ENCODE measurements at regions of chr12 and their contacts with region 1.

Region 1: DNA sequence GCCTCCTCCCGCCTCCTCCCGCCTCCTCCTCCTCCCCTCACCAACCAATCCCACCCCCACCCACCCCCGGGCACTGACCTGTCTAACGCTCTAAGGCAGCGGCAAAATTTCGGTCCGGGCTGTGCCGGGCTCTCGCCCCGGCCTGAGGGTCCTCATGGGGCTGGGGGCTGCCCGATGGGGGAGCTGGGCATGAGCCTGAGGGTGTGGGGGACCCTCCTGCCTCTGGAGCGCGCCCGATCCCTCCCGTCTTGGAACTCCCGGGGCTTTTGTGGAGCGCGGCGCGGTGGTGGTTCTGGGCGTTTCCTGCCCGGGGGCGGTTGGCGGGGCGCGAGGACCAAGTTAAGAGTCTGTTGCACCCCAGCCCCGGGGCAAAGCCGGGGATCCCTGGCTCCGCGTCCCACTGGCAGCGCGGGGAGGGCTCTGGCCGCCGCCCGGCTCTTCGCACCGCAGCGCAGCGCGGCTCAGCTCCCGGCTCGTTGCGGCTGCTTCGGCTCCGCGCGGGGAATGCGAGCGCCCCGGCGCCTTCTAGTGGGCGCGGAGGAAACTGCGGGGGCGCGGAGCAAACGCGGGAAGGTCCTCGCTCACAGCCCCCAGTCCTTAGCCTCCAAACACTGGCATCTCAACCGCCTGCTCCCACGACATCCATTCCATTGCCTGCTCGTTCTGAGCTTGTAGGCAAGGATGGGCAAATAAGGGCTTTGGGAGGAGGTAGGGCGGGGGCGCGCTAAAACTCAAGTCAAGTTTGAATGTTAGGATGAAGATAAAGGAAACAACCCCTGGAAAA is at the start of gene B4GALNT1:
- DNase-seq: peak in 4 of 5 donors; percentile 57 to 70 (median 61)
- H3K4me3 ChIP-seq: peak within 1 kb of the TSS in 1 of 2 donors; percentile 45
- H3K4me3 Mint-ChIP-seq: peak within 1 kb of the TSS; percentile 31 to 85 (median 74)
- H3K27ac ChIP-seq: no peak within 1 kb of the TSS
- H3K27ac Mint-ChIP-seq: peak within 1 kb of the TSS in 1 of 7 donors; percentile 17
- H3K4me1 ChIP-seq: peaks cover 13% of the 10 kb centered on the region
- H3K4me1 Mint-ChIP-seq: peaks cover 7 to 13% (median 9%) of the 10 kb centered on the region in 4 donors
- H3K27me3 ChIP-seq: peaks cover 25% of the 10 kb centered on the region
- H3K27me3 Mint-ChIP-seq: peaks cover 34 to 47% of the 10 kb centered on the region in 2 donors
- total RNA-seq, gene B4GALNT1: not detected

Region 2: GRCh38 chr12:57621497-57622292 is 11.2 kb before region 1 on chr12:
- CTCF ChIA-PET with region 1: interaction called, 29 read pairs
- POLR2A ChIA-PET with region 1: interaction called, 3 read pairs
- intact Hi-C with region 1: no loop called
- DNase-seq: peak; percentile 34 to 57 (median 39)
- H3K4me3 ChIP-seq: peak overlapping the region in 1 of 2 donors; percentile 23
- H3K4me3 Mint-ChIP-seq: peak overlapping the region; percentile 63 to 90 (median 76)
- H3K27ac ChIP-seq: no peak overlapping the region
- H3K27ac Mint-ChIP-seq: peak overlapping the region in 2 of 7 donors; percentile 23 to 77
- H3K4me1 ChIP-seq: peaks cover 29% of the 10 kb centered on the region
- H3K4me1 Mint-ChIP-seq: peaks cover 24 to 36% (median 28%) of the 10 kb centered on the region in 4 donors
- H3K27me3 ChIP-seq: peaks cover 79% of the 10 kb centered on the region
- H3K27me3 Mint-ChIP-seq: peaks cover 82 to 87% of the 10 kb centered on the region in 2 donors

Measured in CD4-positive, alpha-beta memory T cell (primary cell).